Ovary (tissue), 10 donors: ENCODE measurements at regions of chr2 and their contacts with region 1.

Region 1: GRCh38 chr2:219402665-219403515 is 15.2 kb upstream of the DNPEP start:
- DNase-seq: peak; percentile 68 to 77 (median 71)
- H3K4me3 ChIP-seq: no peak overlapping the region
- H3K27ac ChIP-seq: no peak overlapping the region
- H3K4me1 ChIP-seq: peaks cover 2% of the 10 kb centered on the region
- H3K27me3 ChIP-seq: no peaks in the 10 kb centered on the region
- CTCF ChIP-seq: peak; percentile 69 to 85 (median 71)
- EP300 ChIP-seq: no peak
- POLR2A ChIP-seq: no peak

Region 2: GRCh38 chr2:219057709-219058540 is 345.0 kb before region 1 on chr2:
- intact Hi-C with region 1: no loop called
- DNase-seq: peak; percentile 57 to 82 (median 69)
- H3K4me3 ChIP-seq: no peak overlapping the region
- H3K27ac ChIP-seq: no peak overlapping the region
- H3K4me1 ChIP-seq: peaks cover 7% of the 10 kb centered on the region
- H3K27me3 ChIP-seq: peaks cover 3% of the 10 kb centered on the region
- CTCF ChIP-seq: peak; percentile 80 to 84 (median 84)
- EP300 ChIP-seq: no peak
- POLR2A ChIP-seq: no peak

Region 3: GRCh38 chr2:219459460-219460311 is 56.8 kb after region 1 on chr2:
- intact Hi-C with region 1: loop called in 1 of 4 experiments (anchors 5 kb)
- DNase-seq: peak; percentile 59 to 79 (median 68)
- H3K4me3 ChIP-seq: peak overlapping the region; percentile 10
- H3K27ac ChIP-seq: peak overlapping the region; percentile 14 to 69
- H3K4me1 ChIP-seq: peaks cover 17% of the 10 kb centered on the region
- H3K27me3 ChIP-seq: no peaks in the 10 kb centered on the region
- CTCF ChIP-seq: peak; percentile 70 to 73 (median 72)
- EP300 ChIP-seq: no peak
- POLR2A ChIP-seq: no peak

Region 4: DNA sequence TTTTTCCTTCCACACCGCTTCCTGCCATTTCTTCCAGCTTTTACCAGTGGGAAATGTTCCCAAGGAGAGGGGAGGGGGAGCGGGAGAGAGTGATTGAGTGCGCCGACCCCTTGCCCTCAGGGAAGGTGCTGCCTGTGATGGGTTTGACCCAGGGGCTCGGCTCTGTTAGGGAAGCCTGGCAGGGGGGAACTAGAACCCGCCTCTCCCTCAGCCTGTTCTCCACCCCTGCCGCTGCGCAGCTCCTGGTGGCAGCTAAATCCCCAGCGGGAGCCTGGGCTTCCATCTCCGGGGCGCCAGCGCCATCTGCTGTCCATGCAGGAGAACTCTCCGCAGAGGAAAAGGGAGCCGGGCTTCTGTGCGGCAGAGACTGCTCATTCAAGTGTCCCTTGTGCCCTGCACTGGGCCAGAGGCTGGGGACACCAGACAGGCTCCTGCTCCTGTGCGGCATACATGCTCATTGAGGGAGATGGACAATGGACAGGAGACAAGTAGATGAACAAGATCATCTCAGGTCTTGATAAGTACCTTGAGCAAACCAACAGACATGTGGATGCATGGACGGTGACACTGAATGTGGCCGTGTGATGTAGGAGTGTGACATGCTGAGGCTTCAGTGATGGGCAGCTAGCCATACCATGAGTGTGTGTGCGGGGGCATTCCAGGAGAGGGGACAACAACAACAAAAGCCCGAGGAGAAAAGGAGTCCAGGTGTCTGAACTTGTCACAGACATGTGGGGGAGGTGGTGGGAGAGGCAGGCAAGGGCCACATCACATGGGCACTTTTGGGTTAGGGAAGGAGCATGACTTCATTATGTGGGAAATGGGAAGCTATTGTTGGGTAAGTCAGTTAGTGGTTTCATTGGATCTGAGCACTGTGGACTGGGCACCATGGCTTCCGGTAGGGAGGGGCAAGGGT is 127.4 kb after region 1 on chr2:
- intact Hi-C with region 1: loop called (anchors 1 to 5 kb)
- DNase-seq: peak; percentile 85 to 92 (median 89)
- H3K4me3 ChIP-seq: peak overlapping the region; percentile 22
- H3K27ac ChIP-seq: no peak overlapping the region
- H3K4me1 ChIP-seq: no peaks in the 10 kb centered on the region
- H3K27me3 ChIP-seq: no peaks in the 10 kb centered on the region
- CTCF ChIP-seq: peak; percentile 89 to 99 (median 99)
- EP300 ChIP-seq: no peak
- POLR2A ChIP-seq: no peak

Region 5: GRCh38 chr2:219689676-219690628 is 287.1 kb after region 1 on chr2:
- intact Hi-C with region 1: loop called in 1 of 4 experiments (anchors 5 kb)
- DNase-seq: peak in 4 of 5 donors; percentile 42 to 74 (median 49)
- H3K4me3 ChIP-seq: no peak overlapping the region
- H3K27ac ChIP-seq: no peak overlapping the region
- H3K4me1 ChIP-seq: peaks cover 5% of the 10 kb centered on the region
- H3K27me3 ChIP-seq: no peaks in the 10 kb centered on the region
- CTCF ChIP-seq: peak; percentile 73 to 86 (median 78)
- EP300 ChIP-seq: no peak
- POLR2A ChIP-seq: no peak